ENCODE measurements at regions of chr17 and their contacts with region 1.

Region 1: DNA sequence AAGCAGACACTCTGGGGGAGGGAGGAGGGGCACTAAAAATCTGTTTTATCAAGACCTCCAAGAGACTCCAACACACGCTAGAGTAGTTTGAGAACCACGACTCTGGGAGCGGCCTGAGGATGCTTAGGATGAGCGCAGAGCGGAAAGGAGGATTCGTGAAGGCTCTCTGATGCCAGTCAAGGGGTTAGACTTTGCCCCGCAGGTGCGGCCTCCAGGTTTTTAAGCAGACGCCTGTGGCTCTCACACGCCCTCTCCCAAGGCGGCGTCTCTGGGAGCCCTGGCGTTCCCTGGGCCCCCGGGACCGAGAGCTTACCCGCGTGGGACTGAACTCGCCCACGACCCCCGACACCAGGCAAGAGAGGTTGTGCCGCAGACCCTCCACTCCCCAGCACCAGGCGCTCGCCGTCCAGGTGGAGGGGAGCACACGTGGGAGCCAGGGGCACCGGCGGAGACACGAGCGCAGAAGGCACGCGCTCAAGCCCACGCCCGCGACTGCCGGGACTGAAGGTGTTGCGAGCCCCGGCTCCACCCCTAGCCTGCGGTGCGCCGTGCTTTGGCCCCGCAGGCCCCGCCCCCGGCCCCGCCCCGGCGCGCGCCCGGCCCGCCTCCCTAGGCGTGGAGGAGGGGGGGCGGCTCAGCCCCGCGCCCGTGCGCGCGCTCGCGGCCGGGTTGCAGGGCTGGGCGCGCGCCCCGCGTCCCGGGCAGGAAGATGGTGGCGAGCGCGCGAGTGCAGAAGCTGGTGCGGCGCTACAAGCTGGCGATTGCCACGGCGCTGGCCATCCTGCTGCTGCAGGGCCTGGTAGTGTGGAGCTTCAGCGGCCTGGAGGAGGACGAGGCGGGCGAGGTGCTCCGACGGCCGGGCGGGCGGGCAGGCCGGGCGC is at the start of gene XYLT2:
- DNase-seq: peak; percentile 91
- ATAC-seq: peak; percentile 90
- H3K4me3 Mint-ChIP-seq: peak within 1 kb of the TSS; percentile 89
- H3K27ac Mint-ChIP-seq: peak within 1 kb of the TSS; percentile 95
- H3K4me1 Mint-ChIP-seq: peaks cover 44% of the 10 kb centered on the region
- H3K27me3 Mint-ChIP-seq: no peaks in the 10 kb centered on the region
- total RNA-seq, gene XYLT2: 24.7 to 26.0 TPM

Region 2: GRCh38 chr17:50372758-50373556 is 27.3 kb after region 1 on chr17 and contains the starts of genes EME1 and MRPL27:
- CTCF ChIA-PET with region 1: no interaction called
- POLR2A ChIA-PET with region 1: interaction called, 14 read pairs
- DNase-seq: peak; percentile 93
- ATAC-seq: peak; percentile 94
- H3K4me3 Mint-ChIP-seq: peak within 1 kb of the TSS; percentile 99
- H3K27ac Mint-ChIP-seq: peak within 1 kb of the TSS; percentile 100
- H3K4me1 Mint-ChIP-seq: peaks cover 44% of the 10 kb centered on the region
- H3K27me3 Mint-ChIP-seq: no peaks in the 10 kb centered on the region
- total RNA-seq, gene EME1: 23.5 to 27.8 TPM
- total RNA-seq, gene MRPL27: 81.0 to 85.4 TPM

Region 3: DNA sequence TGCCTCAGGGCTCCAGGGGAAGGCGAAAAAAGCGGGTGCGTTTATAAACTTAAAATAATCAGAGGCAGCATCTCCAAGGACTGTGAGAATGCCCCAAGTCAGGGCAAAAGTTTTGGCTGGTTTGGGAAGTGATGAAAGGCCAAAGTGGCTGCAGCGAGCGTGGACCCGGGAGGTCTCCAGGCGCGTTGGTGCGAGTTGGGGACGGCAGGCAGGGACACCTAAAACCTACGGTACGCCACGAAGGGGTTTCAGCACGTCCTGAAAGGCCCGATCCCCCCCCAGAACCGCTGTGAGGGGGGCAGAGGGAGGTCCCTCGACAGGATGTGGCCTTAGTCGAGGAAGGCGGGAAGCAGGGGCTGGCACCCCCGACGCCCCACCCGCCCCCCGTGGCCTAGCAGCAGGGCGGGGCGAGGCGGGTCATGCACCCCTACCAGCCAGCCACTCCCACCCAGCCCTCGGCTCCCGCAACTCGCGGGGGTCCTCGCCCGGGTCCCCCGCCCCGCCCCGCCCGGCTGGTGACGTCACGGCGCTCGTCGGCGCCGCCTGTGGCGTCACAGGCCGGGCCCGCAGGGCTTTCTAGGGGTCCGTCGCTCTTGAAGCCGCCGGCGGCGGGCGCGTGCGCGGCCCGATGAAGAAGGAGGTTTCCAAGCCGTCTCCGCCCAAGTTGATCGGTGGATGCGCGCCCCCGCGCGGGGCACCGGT is 162.3 kb after region 1 on chr17 and contains the start of gene MYCBPAP:
- CTCF ChIA-PET with region 1: no interaction called
- POLR2A ChIA-PET with region 1: no interaction called
- DNase-seq: peak; percentile 90
- ATAC-seq: peak; percentile 79
- H3K4me3 Mint-ChIP-seq: peak within 1 kb of the TSS; percentile 97
- H3K27ac Mint-ChIP-seq: peak within 1 kb of the TSS; percentile 98
- H3K4me1 Mint-ChIP-seq: peaks cover 74% of the 10 kb centered on the region
- H3K27me3 Mint-ChIP-seq: no peaks in the 10 kb centered on the region
- total RNA-seq, gene MYCBPAP: 7.7 to 9.3 TPM